Breast epithelium (tissue), 4 donors: ENCODE measurements at regions of chr3 and their contacts with region 1.

Region 1: DNA sequence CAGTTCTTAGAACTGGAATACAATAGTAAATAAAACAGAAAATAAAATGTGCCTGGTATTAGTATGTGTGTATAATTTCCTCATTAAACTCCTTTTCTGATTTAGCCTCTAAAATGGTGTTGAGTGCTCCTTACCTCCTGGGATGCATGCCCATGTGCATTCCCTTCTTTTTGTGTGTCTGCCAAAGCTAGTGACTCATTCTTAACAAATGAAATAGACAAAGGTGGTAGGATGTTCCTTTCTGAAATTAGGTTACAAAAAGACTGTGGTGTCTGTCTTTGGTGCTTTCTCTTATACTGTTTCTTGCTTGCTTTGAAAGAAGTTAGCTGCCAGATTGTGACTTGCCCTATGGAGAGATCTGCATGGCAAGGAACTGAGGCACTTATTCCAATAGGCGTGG is 623.7 kb downstream of the GRM7 start:
- DNase-seq: no peak
- H3K4me3 ChIP-seq: no peak overlapping the region
- H3K27ac ChIP-seq: no peak overlapping the region
- H3K4me1 ChIP-seq: no peaks in the 10 kb centered on the region
- H3K27me3 ChIP-seq: no peaks in the 10 kb centered on the region
- CTCF ChIP-seq: no peak
- POLR2A ChIP-seq: no peak

Region 2: GRCh38 chr3:7496286-7496685 is 11.7 kb after region 1 on chr3:
- intact Hi-C with region 1: loop called (anchors 1 kb)
- DNase-seq: no peak
- H3K4me3 ChIP-seq: no peak overlapping the region
- H3K27ac ChIP-seq: no peak overlapping the region
- H3K4me1 ChIP-seq: no peaks in the 10 kb centered on the region
- H3K27me3 ChIP-seq: no peaks in the 10 kb centered on the region
- CTCF ChIP-seq: no peak
- POLR2A ChIP-seq: no peak